ENCODE measurements at regions of chr2 and their contacts with region 1.

Region 1: GRCh38 chr2:201231781-201232466 is 28.4 kb upstream of the CASP8 start:
- DNase-seq: peak; percentile 80
- H3K27ac ChIP-seq: peak overlapping the region; percentile 71
- CTCF ChIP-seq: peak; percentile 87

Region 2: DNA sequence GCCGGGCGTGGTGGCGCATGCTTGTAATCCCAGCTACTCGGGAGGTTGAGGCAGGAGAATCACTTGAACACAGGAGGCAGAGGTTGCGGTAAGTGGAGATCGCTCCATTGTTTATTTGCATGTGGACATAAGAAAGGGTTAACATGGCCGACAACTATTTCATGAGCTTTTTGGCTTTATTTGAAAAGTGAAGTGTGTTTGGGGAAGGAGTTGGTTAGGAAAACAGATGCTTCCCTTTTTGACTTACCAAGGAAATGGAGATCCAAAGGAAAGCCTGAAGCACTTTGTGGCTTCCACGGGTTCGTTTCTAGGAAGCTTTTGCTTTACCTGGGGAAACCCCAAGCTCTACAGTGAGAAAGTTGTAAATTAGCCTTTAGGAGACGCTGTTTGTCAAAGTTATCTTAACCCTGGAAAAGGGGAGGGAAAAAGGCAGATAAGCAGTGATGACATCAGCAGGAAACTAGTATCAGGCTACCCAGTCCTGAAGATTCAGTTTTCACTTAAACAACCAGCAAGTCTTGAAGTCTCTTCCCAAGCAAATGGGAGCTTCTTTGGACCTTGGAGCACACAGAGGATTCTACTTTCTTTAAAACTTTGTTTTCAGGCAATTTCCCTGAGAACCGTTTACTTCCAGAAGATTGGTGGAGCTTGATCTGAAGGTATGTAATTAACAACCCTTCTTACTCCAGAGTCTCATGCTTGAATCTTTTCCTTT is 49.1 kb before region 1 on chr2 and contains the start of gene CASP10:
- CTCF ChIA-PET with region 1: interaction called, 11 read pairs
- POLR2A ChIA-PET with region 1: interaction called, 4 read pairs
- DNase-seq: peak; percentile 78
- H3K27ac ChIP-seq: no peak within 1 kb of the TSS
- CTCF ChIP-seq: no peak; the same call in 1 of the 2 replicates

Region 3: GRCh38 chr2:201220102-201220570 is 11.8 kb before region 1 on chr2:
- CTCF ChIA-PET with region 1: interaction called, 11 read pairs
- POLR2A ChIA-PET with region 1: no interaction called
- DNase-seq: peak; percentile 38
- H3K27ac ChIP-seq: no peak overlapping the region
- CTCF ChIP-seq: no peak

Measured in RWPE1 (cell line).